Activated CD8-positive, alpha-beta T cell treated with anti-CD3 and anti-CD28 coated beads for 36 hours (primary cell): ENCODE measurements at regions of chr3 and their contacts with region 1.

Region 1: DNA sequence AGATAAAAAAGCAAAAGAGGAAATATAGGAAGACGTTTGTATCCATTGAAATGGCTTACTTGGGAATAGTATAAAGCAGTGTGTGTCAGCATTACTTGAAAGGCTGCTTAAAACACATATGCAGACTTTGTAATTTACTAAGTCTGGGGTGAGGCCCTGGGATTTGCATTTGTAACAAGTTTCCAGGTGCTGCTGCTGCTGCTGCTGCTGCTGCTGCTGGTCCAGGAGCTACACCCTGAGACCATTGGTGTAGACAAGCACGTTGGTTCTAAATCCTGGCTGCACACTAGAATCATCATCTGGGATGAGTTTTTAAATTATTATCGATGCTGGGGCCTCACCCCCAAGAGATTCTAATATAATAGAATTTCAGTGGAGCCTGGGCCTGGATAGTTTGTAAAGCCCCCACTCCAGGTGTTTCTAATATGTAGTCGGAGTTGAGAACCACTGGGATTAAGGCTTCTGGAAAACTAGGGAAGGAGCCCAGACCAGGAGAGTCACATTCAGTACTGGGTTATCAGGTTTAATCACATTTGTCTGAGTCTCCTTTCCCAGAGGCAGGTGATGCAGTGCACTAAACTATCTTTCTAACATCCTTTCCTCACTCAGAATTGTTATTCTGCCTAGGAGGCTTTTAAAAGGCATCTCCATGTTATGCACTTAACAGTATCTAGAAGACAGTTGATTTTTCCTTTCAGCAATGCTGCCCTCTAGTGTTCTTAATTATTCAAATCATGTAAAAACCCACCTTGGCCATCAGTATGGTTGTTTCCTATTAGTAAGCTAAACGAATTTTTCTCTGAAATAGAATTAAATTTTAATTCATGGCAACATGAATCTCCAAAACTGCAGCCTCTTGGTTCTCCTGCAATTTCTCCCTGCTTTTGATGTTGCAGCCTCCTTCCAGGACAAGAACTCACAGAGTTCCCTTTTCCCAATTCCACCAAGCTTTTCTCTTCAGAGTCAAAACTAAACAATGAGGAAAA is 45.4 kb downstream of the SSR3 start:
- DNase-seq: no peak
- ATAC-seq: peak; percentile 77
- H3K4me3 Mint-ChIP-seq: no peak overlapping the region
- H3K27ac Mint-ChIP-seq: no peak overlapping the region
- H3K4me1 Mint-ChIP-seq: peaks cover 2% of the 10 kb centered on the region
- H3K27me3 Mint-ChIP-seq: peaks cover 6% of the 10 kb centered on the region
- CTCF ChIP-seq: peak; percentile 45

Region 2: GRCh38 chr3:156151824-156152428 is 357.6 kb before region 1 on chr3:
- CTCF ChIA-PET with region 1: interaction called, 99 read pairs
- POLR2A ChIA-PET with region 1: no interaction called
- intact Hi-C with region 1: loop called (anchors 1 kb)
- DNase-seq: peak; percentile 79
- ATAC-seq: peak; percentile 66
- H3K4me3 Mint-ChIP-seq: no peak overlapping the region
- H3K27ac Mint-ChIP-seq: no peak overlapping the region
- H3K4me1 Mint-ChIP-seq: peaks cover 7% of the 10 kb centered on the region
- H3K27me3 Mint-ChIP-seq: no peaks in the 10 kb centered on the region
- CTCF ChIP-seq: peak; percentile 84

Region 3: GRCh38 chr3:156449712-156450574 is 59.5 kb before region 1 on chr3:
- CTCF ChIA-PET with region 1: interaction called, 51 read pairs
- POLR2A ChIA-PET with region 1: no interaction called
- intact Hi-C with region 1: loop called (anchors 5 kb)
- DNase-seq: peak; percentile 8
- ATAC-seq: no peak
- H3K4me3 Mint-ChIP-seq: no peak overlapping the region
- H3K27ac Mint-ChIP-seq: no peak overlapping the region
- H3K4me1 Mint-ChIP-seq: no peaks in the 10 kb centered on the region
- H3K27me3 Mint-ChIP-seq: peaks cover 3% of the 10 kb centered on the region
- CTCF ChIP-seq: peak; percentile 63

Region 4: GRCh38 chr3:156483961-156484787 is 25.3 kb before region 1 on chr3:
- CTCF ChIA-PET with region 1: interaction called, 24 read pairs
- POLR2A ChIA-PET with region 1: no interaction called
- intact Hi-C with region 1: no loop called
- DNase-seq: peak; percentile 67
- ATAC-seq: peak; percentile 73
- H3K4me3 Mint-ChIP-seq: peak overlapping the region; percentile 68
- H3K27ac Mint-ChIP-seq: peak overlapping the region; percentile 87
- H3K4me1 Mint-ChIP-seq: peaks cover 42% of the 10 kb centered on the region
- H3K27me3 Mint-ChIP-seq: no peaks in the 10 kb centered on the region
- CTCF ChIP-seq: no peak

Region 5: DNA sequence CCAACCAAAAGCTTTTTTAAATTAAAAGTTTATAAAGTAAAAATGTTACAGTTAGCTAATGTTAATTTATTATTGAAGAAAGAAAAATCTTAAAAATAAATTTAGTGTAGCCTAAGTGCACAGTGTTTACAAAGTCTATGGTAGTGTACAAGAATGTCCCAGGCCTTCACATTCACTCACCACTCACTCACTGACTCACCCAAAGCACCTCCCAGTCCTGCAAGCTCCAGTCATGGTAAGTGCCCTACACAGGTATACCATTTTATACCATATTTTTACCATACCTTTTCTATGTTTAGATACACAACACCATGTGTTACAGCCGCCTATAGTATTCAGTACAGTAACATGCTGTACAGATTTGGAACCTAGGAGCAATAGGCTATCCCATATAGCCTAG is 16.3 kb after region 1 on chr3:
- CTCF ChIA-PET with region 1: interaction called, 17 read pairs
- POLR2A ChIA-PET with region 1: no interaction called
- intact Hi-C with region 1: no loop called
- DNase-seq: no peak
- ATAC-seq: no peak
- H3K4me3 Mint-ChIP-seq: no peak overlapping the region
- H3K27ac Mint-ChIP-seq: no peak overlapping the region
- H3K4me1 Mint-ChIP-seq: peaks cover 16% of the 10 kb centered on the region
- H3K27me3 Mint-ChIP-seq: peaks cover 11% of the 10 kb centered on the region
- CTCF ChIP-seq: no peak